OCI-LY7 (cell line): ENCODE measurements at regions of chr9 and their contacts with region 1.

Region 1: DNA sequence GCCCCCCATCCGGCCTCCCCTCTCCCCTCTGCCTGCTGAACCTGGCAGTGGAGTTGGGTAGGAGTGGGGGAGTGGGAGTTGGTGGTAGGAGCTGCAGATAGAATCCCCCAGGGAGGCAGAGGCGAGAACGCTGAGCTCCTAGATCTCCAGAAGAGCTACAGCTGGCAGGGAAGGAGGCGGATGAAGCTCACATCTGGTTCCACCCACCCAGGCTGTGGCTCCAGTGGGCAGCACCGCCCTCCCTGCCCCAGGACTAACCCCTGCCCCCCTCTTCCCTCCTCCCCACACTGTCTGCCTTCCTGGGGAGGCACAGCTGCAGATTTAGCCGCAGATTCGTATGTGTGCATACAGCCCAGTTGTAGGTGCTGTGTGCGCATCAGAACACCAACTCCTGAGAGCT is 34.2 kb downstream of the C9orf50 start:
- DNase-seq: no peak
- H3K4me3 ChIP-seq: no peak overlapping the region
- H3K27ac ChIP-seq: no peak overlapping the region
- H3K4me1 ChIP-seq: peaks cover 33% of the 10 kb centered on the region
- CTCF ChIP-seq: 0 out of 2 replicates have a peak, but pooled peaks have one; percentile 4

Region 2: GRCh38 chr9:129166623-129167557 is 419.8 kb before region 1 on chr9:
- CTCF ChIA-PET with region 1: interaction called, 11 read pairs
- POLR2A ChIA-PET with region 1: no interaction called
- intact Hi-C with region 1: no loop called
- DNase-seq: peak; percentile 50
- H3K4me3 ChIP-seq: peak overlapping the region; percentile 46
- H3K27ac ChIP-seq: no peak overlapping the region
- H3K4me1 ChIP-seq: peaks cover 16% of the 10 kb centered on the region
- CTCF ChIP-seq: no peak